PC-3 (cell line): ENCODE measurements at regions of chr14 and their contacts with region 1.

Region 1: DNA sequence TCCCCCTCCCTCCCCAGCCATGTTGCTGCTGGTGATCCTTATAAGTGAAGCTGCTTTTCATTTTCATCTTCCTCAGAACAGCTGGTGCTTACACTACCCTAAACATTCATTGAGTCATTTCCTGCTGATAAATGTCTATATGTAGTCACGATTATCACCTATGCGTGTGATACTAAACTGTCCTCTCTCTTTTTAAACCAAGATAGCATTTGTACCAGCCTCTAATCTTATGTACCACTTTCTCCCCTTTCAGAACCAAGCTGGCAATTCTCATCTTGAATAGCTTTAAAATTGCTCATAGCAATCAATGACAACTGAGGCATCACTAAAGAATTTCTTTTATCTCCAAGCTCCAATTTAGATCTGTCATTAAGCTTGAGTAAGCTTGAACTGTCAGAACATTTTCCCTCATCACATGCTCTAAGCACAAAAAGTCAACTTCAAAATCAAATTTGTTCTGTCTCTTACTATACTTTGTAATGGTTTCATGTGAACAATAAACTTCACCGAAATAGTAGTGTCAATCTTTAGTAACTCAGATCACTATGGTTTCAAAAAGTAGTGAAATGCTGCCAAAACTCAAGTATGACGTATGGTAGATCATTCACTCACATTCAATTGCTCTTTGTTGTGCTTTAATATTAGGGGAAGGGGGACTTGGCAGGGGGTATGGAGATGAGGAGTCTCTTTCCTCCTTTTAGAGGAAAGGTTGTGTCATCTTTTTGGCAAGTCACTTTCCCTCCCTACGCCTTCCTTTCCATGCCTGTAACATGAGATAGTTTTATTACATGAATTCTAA is 178.1 kb upstream of the NOVA1 start:
- DNase-seq: peak; percentile 77
- ATAC-seq: peak; percentile 62
- H3K4me3 ChIP-seq: peak overlapping the region; percentile 35
- H3K27ac ChIP-seq: peak overlapping the region; percentile 88
- H3K4me1 ChIP-seq: peaks cover 38% of the 10 kb centered on the region
- H3K27me3 ChIP-seq: no peaks in the 10 kb centered on the region
- CTCF ChIP-seq: no peak

Region 2: DNA sequence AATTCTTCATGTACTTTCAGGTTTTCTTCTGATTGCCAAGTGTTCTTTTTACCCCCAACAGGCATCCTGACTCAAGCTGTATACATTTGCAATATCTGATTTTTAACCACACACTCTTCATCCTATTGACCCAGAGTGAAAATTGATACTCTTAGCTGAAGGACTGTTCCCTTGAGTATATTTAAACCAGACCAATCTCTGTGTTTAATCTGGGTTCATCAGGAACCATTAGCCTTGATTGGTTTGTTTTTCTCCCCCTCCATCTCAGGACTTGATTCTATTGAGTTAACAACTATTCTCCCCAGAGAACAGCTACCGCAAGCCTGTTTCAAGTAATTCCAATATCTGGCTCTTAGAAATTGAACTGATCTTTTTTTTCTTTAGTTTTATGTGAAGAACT is 44.2 kb after region 1 on chr14:
- CTCF ChIA-PET with region 1: no interaction called
- POLR2A ChIA-PET with region 1: no interaction called
- intact Hi-C with region 1: loop called (anchors 5 kb)
- DNase-seq: peak; percentile 76
- ATAC-seq: peak; percentile 77
- H3K4me3 ChIP-seq: peak overlapping the region; percentile 34
- H3K27ac ChIP-seq: peak overlapping the region; percentile 68
- H3K4me1 ChIP-seq: peaks cover 27% of the 10 kb centered on the region
- H3K27me3 ChIP-seq: no peaks in the 10 kb centered on the region
- CTCF ChIP-seq: no peak

Region 3: DNA sequence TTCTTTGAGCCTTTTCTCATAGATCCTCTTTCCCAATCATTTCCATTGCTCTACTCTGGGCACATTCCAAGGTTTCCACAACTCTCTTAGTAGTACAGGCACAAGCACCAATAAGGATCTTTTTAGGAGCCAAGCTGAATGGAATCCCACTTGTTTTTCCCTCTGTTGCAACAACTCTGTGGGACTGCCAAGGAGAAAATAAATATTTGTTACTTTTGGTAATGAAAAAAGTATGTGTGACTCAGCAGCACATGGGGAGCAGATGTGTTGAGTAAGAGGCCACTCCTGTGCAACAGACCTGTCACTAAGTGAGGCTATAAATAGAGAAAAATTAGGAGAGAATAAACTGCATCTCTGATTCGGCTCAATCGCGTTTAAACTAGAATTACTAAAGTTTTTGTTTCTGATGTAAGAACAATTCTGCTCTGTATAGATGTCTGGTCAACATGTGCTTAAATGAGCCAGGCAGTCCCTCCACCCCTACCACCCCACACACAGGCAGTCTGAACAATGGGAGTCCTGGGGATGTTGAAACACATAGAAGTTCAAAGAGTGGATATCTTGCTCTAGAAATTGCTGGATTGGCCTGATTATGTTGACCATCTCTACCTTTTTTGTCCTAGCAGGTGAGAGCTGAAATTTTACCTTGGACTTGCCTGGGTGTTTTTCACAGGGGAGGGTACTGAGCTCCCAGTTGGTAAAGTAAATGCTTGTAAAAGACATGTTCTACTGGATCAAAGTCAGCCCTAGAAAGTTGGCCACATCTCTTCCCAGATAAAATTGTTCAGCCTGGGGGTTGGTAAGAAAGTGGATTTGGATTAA is 66.2 kb after region 1 on chr14:
- CTCF ChIA-PET with region 1: no interaction called
- POLR2A ChIA-PET with region 1: no interaction called
- intact Hi-C with region 1: loop called (anchors 2 kb)
- DNase-seq: peak; percentile 98
- ATAC-seq: peak; percentile 92
- H3K4me3 ChIP-seq: peak overlapping the region; percentile 36; the same call in 1 of the 2 replicates
- H3K27ac ChIP-seq: peak overlapping the region; percentile 92
- H3K4me1 ChIP-seq: peaks cover 38% of the 10 kb centered on the region
- H3K27me3 ChIP-seq: no peaks in the 10 kb centered on the region
- CTCF ChIP-seq: no peak

Region 4: DNA sequence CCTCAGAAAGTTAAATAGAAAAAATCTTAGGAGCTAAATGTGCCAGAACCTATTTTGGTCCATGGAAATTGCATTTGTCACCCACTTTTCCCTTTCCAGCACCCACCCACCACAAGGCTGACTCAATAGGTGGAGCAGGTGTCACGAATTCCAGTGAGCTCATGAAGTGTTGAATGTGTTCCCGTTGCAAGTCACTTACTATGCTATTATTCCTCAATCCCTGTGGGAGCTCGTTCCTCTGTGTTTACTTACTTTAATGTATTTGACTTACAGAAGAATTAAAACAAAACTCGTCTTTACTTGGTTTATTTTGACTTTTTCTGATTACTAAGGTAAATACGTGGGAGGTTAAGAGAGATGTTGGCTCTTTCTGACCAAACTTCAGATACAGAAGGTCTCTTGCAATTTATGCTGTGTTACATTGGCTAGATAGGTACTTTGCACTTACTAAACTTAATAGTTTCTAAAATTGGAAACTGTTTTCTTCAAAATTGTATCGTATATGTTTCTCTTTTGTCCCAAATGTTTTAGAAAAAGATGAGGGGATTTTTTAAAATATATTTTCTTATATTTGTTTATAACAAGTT is 91.3 kb after region 1 on chr14:
- CTCF ChIA-PET with region 1: no interaction called
- POLR2A ChIA-PET with region 1: no interaction called
- intact Hi-C with region 1: loop called (anchors 5 kb)
- DNase-seq: peak; percentile 72
- ATAC-seq: peak; percentile 97
- H3K4me3 ChIP-seq: peak overlapping the region; percentile 28; the same call in 1 of the 2 replicates
- H3K27ac ChIP-seq: no peak overlapping the region
- H3K4me1 ChIP-seq: peaks cover 24% of the 10 kb centered on the region
- H3K27me3 ChIP-seq: no peaks in the 10 kb centered on the region
- CTCF ChIP-seq: no peak

Region 5: GRCh38 chr14:27553790-27554189 is 777.8 kb after region 1 on chr14:
- CTCF ChIA-PET with region 1: no interaction called
- POLR2A ChIA-PET with region 1: interaction called, 10 read pairs
- intact Hi-C with region 1: no loop called
- DNase-seq: peak; percentile 29
- ATAC-seq: peak; percentile 38; the same call in 1 of the 2 replicates
- H3K4me3 ChIP-seq: no peak overlapping the region
- H3K27ac ChIP-seq: no peak overlapping the region
- H3K4me1 ChIP-seq: no peaks in the 10 kb centered on the region
- H3K27me3 ChIP-seq: no peaks in the 10 kb centered on the region
- CTCF ChIP-seq: peak; percentile 63